BJ (cell line): ENCODE measurements at regions of chr4 and their contacts with region 1.

Region 1: GRCh38 chr4:3136453-3136852 is 62.0 kb downstream of the HTT start:
- DNase-seq: no peak
- H3K4me3 ChIP-seq: no peak overlapping the region
- H3K27me3 ChIP-seq: no peaks in the 10 kb centered on the region
- CTCF ChIP-seq: no peak

Region 2: DNA sequence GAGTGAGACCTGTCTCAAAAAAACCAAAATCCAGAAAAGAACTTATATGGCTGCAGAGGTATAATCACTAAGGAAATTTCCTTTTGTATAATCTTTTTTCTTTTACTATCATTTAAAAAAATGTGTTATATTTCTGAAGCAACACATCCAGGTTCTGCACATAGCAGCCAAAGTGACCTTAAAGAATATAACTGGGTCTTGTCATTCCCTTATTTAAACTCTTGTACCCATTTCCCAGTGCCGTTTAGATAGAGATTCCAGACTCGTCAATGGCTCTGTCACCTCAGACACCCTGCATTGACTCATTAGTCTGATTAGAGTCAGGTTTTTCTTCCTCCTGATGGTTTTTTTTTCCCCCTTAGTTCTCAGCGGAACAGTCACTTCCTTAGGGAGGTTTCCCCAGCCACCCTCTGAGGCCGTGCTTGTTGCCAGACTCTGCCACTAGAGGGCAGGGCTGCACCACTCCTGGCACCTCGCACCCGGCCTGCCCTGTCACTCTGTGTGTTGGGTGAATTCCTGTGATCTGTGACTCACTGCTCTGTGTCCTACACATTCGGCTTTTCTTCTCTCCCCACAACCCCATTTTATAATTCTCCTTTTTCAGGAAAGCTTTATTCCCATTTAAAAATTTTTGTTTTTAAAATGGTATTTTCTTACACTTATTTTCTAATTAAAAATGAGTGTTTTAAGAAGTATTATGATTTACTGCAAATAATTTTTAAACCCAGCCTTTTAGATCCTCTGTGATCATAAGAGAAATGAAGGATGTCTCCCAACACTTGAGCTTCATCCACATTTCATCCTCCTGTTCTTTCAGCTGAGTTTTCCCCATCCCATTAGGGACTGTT is 29.9 kb before region 1 on chr4:
- CTCF ChIA-PET with region 1: interaction called, 55 read pairs
- POLR2A ChIA-PET with region 1: no interaction called
- DNase-seq: peak; percentile 52
- H3K4me3 ChIP-seq: no peak overlapping the region
- H3K27me3 ChIP-seq: no peaks in the 10 kb centered on the region
- CTCF ChIP-seq: peak; percentile 98

Region 3: GRCh38 chr4:3122081-3122563 is 14.3 kb before region 1 on chr4:
- CTCF ChIA-PET with region 1: interaction called, 21 read pairs
- POLR2A ChIA-PET with region 1: no interaction called
- DNase-seq: no peak
- H3K4me3 ChIP-seq: no peak overlapping the region
- H3K27me3 ChIP-seq: no peaks in the 10 kb centered on the region
- CTCF ChIP-seq: no peak

Region 4: DNA sequence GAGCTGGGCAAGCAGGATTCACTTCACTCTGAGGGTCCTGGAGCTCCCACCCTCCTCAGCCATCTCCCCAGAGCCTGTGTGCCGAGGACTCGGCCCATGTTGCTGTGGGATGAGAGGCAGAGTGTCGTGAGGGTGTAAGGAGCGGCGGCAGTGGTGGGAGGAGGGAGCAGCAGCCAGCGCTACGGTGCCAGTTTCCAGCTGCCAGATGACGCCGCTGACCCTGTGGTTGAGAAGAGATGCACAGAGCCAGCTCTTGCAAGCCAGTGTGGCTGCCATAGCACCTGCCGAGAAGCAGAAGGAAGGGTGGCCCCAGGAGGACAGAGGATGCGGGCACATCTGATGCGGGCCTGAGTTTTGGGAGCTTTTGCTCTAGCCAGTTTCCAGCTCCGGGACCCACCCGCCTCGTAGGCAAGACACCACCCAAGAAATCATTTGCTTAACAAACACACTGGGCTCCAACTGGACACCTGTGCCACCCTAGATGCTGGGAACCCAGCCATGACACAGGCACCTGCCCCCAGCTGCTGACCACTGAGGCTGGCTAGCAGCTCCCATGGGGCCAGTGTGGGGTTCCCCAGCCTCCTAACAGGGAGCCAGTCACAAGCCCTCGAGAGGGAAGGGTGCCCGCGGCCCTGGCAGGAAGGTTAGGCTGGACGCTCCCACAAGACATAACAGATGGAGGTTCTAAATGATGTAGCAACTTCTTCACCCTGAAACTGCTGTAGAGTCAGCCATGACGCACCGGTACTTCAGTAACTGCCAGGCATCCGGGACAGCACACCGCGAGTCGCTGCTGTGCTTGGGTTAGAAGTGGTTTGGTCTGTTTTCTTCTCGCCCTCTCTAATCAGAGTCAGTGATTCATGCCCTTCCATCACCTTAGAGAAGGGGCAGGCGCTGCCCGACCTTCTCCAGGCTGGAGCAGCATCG is 121.4 kb after region 1 on chr4:
- CTCF ChIA-PET with region 1: no interaction called
- POLR2A ChIA-PET with region 1: no interaction called
- DNase-seq: no peak
- H3K4me3 ChIP-seq: no peak overlapping the region
- H3K27me3 ChIP-seq: no peaks in the 10 kb centered on the region
- CTCF ChIP-seq: no peak

Region 5: DNA sequence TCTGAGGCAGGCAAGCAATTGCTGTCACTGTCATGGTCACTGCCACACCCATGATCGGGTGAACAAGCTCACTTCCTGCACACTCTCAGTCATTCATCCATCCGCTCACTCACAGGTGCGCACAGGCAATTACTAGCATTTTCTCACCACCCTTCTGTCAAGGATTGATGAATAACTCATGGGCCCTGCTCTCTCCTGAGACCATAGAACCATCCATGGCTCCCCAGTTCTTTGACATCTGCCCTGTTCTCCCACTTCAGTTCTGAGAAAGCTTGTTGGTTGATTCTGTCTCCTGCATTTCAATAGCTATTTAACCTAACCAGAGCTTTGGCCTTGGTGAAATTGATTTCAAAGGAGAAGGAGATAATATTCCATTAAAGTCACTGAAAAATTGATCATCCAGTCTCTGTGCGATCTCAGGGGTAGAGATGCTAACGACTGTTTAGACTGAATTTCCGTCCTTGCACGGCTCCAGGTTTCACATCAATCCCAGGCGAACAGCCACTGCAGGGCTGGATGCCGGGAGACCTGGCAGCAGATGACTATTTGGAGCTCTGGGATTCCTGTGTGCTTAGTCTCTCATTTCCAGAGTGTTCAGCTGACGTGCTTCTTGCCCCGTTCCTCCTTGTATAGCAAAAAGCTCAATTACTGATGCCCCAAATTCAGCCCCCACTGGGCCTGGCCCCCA is 592.9 kb after region 1 on chr4:
- CTCF ChIA-PET with region 1: no interaction called
- POLR2A ChIA-PET with region 1: no interaction called
- DNase-seq: no peak
- H3K4me3 ChIP-seq: no peak overlapping the region
- H3K27me3 ChIP-seq: peaks cover 14% of the 10 kb centered on the region
- CTCF ChIP-seq: no peak